Caco-2 (cell line): ENCODE measurements at regions of chr5 and their contacts with region 1.

Region 1: DNA sequence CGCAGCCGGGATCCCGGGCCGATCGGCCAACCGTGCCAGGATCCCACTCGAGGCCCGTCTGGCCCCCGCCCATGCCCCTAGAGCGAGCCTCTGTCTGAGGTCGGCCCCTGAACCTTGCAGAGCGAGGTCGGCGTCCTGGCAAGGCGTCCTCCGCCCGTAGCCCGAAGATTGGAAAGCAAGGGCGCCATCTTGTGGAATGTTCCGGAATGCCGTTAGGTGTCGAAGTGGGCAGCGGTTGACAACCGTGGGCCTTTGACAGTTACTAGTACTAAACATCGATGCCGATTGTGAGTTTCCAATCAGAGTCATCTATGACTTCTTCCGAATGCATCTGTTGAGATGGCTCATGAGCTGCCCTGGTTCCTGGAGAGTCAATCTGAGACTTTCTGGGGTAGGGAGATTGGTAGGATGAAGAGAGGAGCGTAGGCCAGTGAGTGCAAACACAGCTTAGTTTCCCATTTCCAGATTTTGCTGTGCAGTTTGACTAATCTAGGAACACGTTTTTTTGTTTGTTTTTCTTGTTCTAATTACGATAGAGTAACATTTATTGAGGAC is 923 bp upstream of the PLK2 start:
- DNase-seq: peak; percentile 91 to 93
- H3K4me3 ChIP-seq: peak overlapping the region; percentile 99
- H3K4me3 Mint-ChIP-seq: peak overlapping the region; percentile 94
- H3K27ac Mint-ChIP-seq: peak overlapping the region; percentile 94
- H3K4me1 ChIP-seq: peaks cover 17% of the 10 kb centered on the region
- H3K4me1 Mint-ChIP-seq: peaks cover 24% of the 10 kb centered on the region
- H3K27me3 ChIP-seq: no peaks in the 10 kb centered on the region
- H3K27me3 Mint-ChIP-seq: no peaks in the 10 kb centered on the region
- CTCF ChIP-seq: peak; percentile 78 to 88

Region 2: DNA sequence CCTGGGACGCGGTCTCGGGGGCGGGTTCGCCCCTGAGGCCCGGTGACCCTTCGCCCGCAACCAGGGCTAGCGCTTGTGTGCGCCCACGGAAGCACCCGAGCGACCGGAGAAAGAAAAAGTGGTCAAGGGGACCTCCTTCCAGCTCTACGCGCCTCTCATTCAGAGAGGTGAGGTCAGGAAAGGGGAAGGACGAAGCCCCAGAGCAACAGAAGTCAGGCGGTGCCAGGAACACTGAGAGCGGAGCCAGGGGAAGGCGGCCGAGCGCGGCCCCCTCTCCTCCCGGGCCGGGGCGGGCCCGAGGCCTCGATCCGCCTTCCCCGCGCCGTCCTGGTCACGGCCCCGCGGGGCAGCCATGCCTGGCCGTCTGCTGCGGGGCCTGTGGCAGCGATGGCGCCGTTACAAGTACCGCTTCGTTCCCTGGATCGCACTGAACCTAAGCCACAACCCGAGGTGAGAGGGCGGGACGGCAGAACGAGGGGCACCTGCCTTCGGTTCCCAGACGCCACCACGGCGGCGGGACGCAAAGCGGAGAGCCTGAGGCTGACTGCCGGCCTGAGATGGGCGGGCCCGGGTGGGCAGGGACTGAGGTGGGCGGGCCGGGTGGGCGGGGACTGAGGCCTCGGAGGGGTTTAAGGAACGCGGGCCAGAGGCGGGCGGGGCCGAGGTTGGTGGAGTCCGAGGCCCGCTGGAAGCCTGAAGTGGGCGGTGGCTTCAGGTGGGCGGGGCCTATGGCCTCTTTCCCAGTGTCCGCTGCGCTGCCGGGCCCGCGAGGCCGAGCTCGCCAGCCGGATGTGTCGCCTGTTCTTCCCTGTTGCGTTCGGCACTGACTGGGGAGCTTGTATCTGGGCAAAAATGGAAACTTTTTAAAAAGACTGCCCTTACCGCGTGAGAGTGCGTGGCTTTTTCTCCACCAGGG is 1551.3 kb before region 1 on chr5 and contains the start of gene SETD9:
- CTCF ChIA-PET with region 1: no interaction called
- POLR2A ChIA-PET with region 1: no interaction called
- intact Hi-C with region 1: loop called (anchors 10 kb)
- DNase-seq: peak; percentile 97 to 99
- H3K4me3 ChIP-seq: peak within 1 kb of the TSS; percentile 85
- H3K4me3 Mint-ChIP-seq: peak within 1 kb of the TSS; percentile 96
- H3K27ac Mint-ChIP-seq: peak within 1 kb of the TSS; percentile 94
- H3K4me1 ChIP-seq: no peaks in the 10 kb centered on the region
- H3K4me1 Mint-ChIP-seq: no peaks in the 10 kb centered on the region
- H3K27me3 ChIP-seq: no peaks in the 10 kb centered on the region
- H3K27me3 Mint-ChIP-seq: no peaks in the 10 kb centered on the region
- CTCF ChIP-seq: no peak
- total RNA-seq, gene SETD9: 10.5 and 13.1 TPM in 2 replicates

Region 3: GRCh38 chr5:57383093-57383861 is 1077.5 kb before region 1 on chr5:
- CTCF ChIA-PET with region 1: no interaction called
- POLR2A ChIA-PET with region 1: no interaction called
- intact Hi-C with region 1: loop called (anchors 2 kb)
- DNase-seq: peak; percentile 76 to 79
- H3K4me3 ChIP-seq: no peak overlapping the region
- H3K4me3 Mint-ChIP-seq: peak overlapping the region; percentile 16
- H3K27ac Mint-ChIP-seq: peak overlapping the region; percentile 60
- H3K4me1 ChIP-seq: peaks cover 20% of the 10 kb centered on the region
- H3K4me1 Mint-ChIP-seq: peaks cover 16% of the 10 kb centered on the region
- H3K27me3 ChIP-seq: no peaks in the 10 kb centered on the region
- H3K27me3 Mint-ChIP-seq: no peaks in the 10 kb centered on the region
- CTCF ChIP-seq: peak; percentile 24 to 41

Region 4: GRCh38 chr5:57779383-57780223 is 681.2 kb before region 1 on chr5:
- CTCF ChIA-PET with region 1: interaction called, 32 read pairs
- POLR2A ChIA-PET with region 1: no interaction called
- intact Hi-C with region 1: loop called (anchors 1 kb)
- DNase-seq: peak; percentile 50 to 69
- H3K4me3 ChIP-seq: no peak overlapping the region
- H3K4me3 Mint-ChIP-seq: no peak overlapping the region
- H3K27ac Mint-ChIP-seq: no peak overlapping the region
- H3K4me1 ChIP-seq: peaks cover 34% of the 10 kb centered on the region
- H3K4me1 Mint-ChIP-seq: peaks cover 21% of the 10 kb centered on the region
- H3K27me3 ChIP-seq: no peaks in the 10 kb centered on the region
- H3K27me3 Mint-ChIP-seq: no peaks in the 10 kb centered on the region
- CTCF ChIP-seq: peak; percentile 65 to 68

Region 5: DNA sequence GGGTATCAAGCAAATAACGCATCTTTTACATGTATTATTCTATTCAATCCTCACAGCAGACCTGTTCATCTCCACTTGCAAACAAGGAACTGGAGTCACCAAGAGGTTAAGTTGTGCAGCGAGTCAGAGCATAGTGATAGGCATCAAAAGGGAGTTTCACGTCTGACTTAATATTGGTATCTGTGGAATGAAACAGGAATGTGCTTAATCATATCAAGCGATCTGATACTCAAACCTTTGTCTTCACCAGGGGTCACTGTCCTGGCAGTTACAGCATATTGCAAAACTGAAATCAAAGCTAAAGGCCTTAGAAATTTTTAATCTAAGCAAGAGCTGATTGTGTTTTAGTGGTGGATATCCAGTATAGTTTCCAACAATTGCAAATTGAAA is 272.6 kb before region 1 on chr5:
- CTCF ChIA-PET with region 1: no interaction called
- POLR2A ChIA-PET with region 1: no interaction called
- intact Hi-C with region 1: loop called (anchors 2 kb)
- DNase-seq: peak; percentile 67 to 76
- H3K4me3 ChIP-seq: no peak overlapping the region
- H3K4me3 Mint-ChIP-seq: no peak overlapping the region
- H3K27ac Mint-ChIP-seq: peak overlapping the region; percentile 72
- H3K4me1 ChIP-seq: peaks cover 40% of the 10 kb centered on the region
- H3K4me1 Mint-ChIP-seq: peaks cover 11% of the 10 kb centered on the region
- H3K27me3 ChIP-seq: no peaks in the 10 kb centered on the region
- H3K27me3 Mint-ChIP-seq: no peaks in the 10 kb centered on the region
- CTCF ChIP-seq: no peak

Region 6: GRCh38 chr5:58322453-58322852 is 138.4 kb before region 1 on chr5:
- CTCF ChIA-PET with region 1: no interaction called
- POLR2A ChIA-PET with region 1: no interaction called
- intact Hi-C with region 1: no loop called
- DNase-seq: no peak
- H3K4me3 ChIP-seq: no peak overlapping the region
- H3K4me3 Mint-ChIP-seq: no peak overlapping the region
- H3K27ac Mint-ChIP-seq: no peak overlapping the region
- H3K4me1 ChIP-seq: no peaks in the 10 kb centered on the region; the same call in 1 of the 2 replicates
- H3K4me1 Mint-ChIP-seq: peaks cover 7% of the 10 kb centered on the region
- H3K27me3 ChIP-seq: no peaks in the 10 kb centered on the region
- H3K27me3 Mint-ChIP-seq: no peaks in the 10 kb centered on the region
- CTCF ChIP-seq: no peak

Region 7: DNA sequence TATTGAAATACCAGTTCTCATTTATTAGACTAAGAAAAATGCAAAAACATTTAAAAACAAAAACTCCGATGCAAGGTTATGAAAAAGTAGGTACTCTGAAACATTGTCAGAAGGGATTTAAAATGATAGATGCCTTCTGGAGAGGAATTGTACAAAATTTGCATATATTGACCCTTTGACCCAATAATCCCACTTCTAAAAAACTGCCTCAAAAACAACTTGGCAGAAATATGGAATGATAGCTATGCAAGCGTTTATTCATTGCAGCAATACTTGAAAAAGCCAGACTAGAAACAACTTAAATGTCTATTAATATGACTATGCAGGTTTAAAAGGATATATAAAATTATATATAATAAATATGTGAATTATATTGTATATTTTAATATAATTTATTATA is 119.3 kb before region 1 on chr5:
- CTCF ChIA-PET with region 1: no interaction called
- POLR2A ChIA-PET with region 1: no interaction called
- intact Hi-C with region 1: loop called (anchors 5 kb)
- DNase-seq: no peak
- H3K4me3 ChIP-seq: no peak overlapping the region
- H3K4me3 Mint-ChIP-seq: no peak overlapping the region
- H3K27ac Mint-ChIP-seq: no peak overlapping the region
- H3K4me1 ChIP-seq: no peaks in the 10 kb centered on the region
- H3K4me1 Mint-ChIP-seq: no peaks in the 10 kb centered on the region
- H3K27me3 ChIP-seq: no peaks in the 10 kb centered on the region
- H3K27me3 Mint-ChIP-seq: no peaks in the 10 kb centered on the region
- CTCF ChIP-seq: no peak

Region 8: GRCh38 chr5:58431832-58432231 is 29.0 kb before region 1 on chr5:
- CTCF ChIA-PET with region 1: no interaction called
- POLR2A ChIA-PET with region 1: no interaction called
- intact Hi-C with region 1: no loop called
- DNase-seq: no peak
- H3K4me3 ChIP-seq: no peak overlapping the region
- H3K4me3 Mint-ChIP-seq: no peak overlapping the region
- H3K27ac Mint-ChIP-seq: no peak overlapping the region
- H3K4me1 ChIP-seq: no peaks in the 10 kb centered on the region
- H3K4me1 Mint-ChIP-seq: no peaks in the 10 kb centered on the region
- H3K27me3 ChIP-seq: no peaks in the 10 kb centered on the region
- H3K27me3 Mint-ChIP-seq: no peaks in the 10 kb centered on the region
- CTCF ChIP-seq: no peak

Region 9: GRCh38 chr5:58565033-58565432 is 104.2 kb after region 1 on chr5:
- CTCF ChIA-PET with region 1: no interaction called
- POLR2A ChIA-PET with region 1: no interaction called
- intact Hi-C with region 1: no loop called
- DNase-seq: no peak
- H3K4me3 ChIP-seq: no peak overlapping the region
- H3K4me3 Mint-ChIP-seq: no peak overlapping the region
- H3K27ac Mint-ChIP-seq: no peak overlapping the region
- H3K4me1 ChIP-seq: 0 out of 2 replicates have a peak, but pooled peaks cover 4% of the 10 kb centered on the region
- H3K4me1 Mint-ChIP-seq: no peaks in the 10 kb centered on the region
- H3K27me3 ChIP-seq: no peaks in the 10 kb centered on the region
- H3K27me3 Mint-ChIP-seq: no peaks in the 10 kb centered on the region
- CTCF ChIP-seq: no peak